Activated CD8-positive, alpha-beta memory T cell treated with anti-CD3 and anti-CD28 coated beads, Interleukin-2, amount 10 ng/mL, durations not matched to agents 7 days and 5 days (primary cell): ENCODE measurements at regions of chr5 and their contacts with region 1.

Region 1: GRCh38 chr5:90264689-90265544 is 144.6 kb downstream of the CETN3 start:
- DNase-seq: peak; percentile 59
- ATAC-seq: peak; percentile 55
- H3K4me3 Mint-ChIP-seq: no peak overlapping the region
- H3K27ac Mint-ChIP-seq: no peak overlapping the region
- H3K4me1 Mint-ChIP-seq: no peaks in the 10 kb centered on the region
- H3K27me3 Mint-ChIP-seq: peaks cover 9% of the 10 kb centered on the region

Region 2: GRCh38 chr5:88729084-88729828 is 1535.7 kb before region 1 on chr5:
- CTCF ChIA-PET with region 1: interaction called, 31 read pairs
- DNase-seq: peak; percentile 68
- ATAC-seq: peak; percentile 51
- H3K4me3 Mint-ChIP-seq: no peak overlapping the region
- H3K27ac Mint-ChIP-seq: no peak overlapping the region
- H3K4me1 Mint-ChIP-seq: peaks cover 4% of the 10 kb centered on the region
- H3K27me3 Mint-ChIP-seq: peaks cover 14% of the 10 kb centered on the region

Region 3: DNA sequence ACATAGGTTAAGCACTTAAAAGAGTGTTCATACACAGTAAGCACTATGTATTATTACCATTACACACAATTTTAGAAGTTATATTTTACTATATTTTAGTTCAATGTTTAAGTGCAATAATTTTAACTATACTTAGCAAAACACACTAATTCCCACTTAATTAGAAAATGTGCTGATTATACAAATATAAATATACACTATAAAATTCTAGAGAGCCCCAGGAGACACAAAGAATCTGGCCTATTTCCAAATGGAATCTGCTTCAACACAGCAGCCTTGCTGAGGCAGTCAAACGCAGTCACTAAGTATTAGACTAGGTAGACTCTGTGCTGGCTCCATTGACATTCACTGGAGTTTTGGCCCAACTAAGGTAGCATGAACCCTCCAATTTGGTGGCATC is 16.3 kb before region 1 on chr5:
- CTCF ChIA-PET with region 1: no interaction called
- DNase-seq: no peak
- ATAC-seq: no peak
- H3K4me3 Mint-ChIP-seq: no peak overlapping the region
- H3K27ac Mint-ChIP-seq: no peak overlapping the region
- H3K4me1 Mint-ChIP-seq: no peaks in the 10 kb centered on the region
- H3K27me3 Mint-ChIP-seq: no peaks in the 10 kb centered on the region